ENCODE measurements at regions of chr3 and their contacts with region 1.

Region 1: DNA sequence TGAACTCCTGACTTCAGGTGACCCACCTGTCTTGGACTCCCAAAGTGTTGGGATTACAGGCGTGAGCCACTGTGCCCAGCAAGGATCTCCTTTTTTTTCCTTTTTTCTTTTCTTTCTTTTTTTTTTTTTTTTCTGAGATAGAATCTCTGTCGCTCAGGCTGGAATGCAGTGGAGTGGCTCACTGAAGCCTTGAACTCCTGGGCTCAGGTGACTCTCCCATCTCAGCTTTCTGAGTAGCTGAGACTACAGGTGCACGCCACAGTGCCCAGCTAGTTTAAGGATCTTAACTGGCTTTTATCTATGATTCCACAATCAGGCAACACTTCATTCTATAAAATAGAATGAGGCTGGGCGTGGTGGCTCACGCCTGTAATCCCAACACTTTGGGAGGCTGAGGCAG is 16.3 kb upstream of the NICN1 start:
- DNase-seq: no peak
- CTCF ChIP-seq: no peak

Region 2: GRCh38 chr3:49428697-49429100 is 16.7 kb before region 1 on chr3:
- CTCF ChIA-PET with region 1: interaction called, 12 read pairs
- POLR2A ChIA-PET with region 1: interaction called, 5 read pairs
- DNase-seq: no peak
- CTCF ChIP-seq: no peak

Measured in GM10248 (cell line).